ENCODE measurements at regions of chr20 and their contacts with region 1.

Region 1: GRCh38 chr20:49594143-49594930 is 26.4 kb upstream of the PTGIS start:
- DNase-seq: no peak
- CTCF ChIP-seq: no peak

Region 2: GRCh38 chr20:49140834-49141233 is 453.5 kb before region 1 on chr20:
- CTCF ChIA-PET with region 1: no interaction called
- POLR2A ChIA-PET with region 1: no interaction called
- DNase-seq: no peak
- CTCF ChIP-seq: no peak

Region 3: DNA sequence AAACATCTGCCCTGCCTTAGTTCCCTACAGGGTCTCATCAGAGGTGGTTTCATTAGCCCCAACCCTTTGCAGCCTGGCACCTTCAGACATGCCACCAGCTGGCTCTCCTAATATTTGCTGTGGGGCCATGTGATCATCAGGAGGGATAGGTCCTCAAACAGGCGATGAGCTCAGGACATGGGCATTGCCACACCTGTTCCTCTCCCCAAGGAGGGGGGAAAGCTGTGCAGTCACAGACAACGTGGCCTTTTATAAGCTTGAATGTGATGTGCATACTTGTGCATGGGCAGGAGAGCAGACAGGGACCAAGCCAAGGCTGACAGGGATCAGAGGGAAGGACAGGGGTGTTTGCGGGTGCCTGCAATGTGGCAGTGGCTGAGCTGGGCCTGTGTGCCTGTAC is 237.7 kb before region 1 on chr20:
- CTCF ChIA-PET with region 1: no interaction called
- POLR2A ChIA-PET with region 1: no interaction called
- DNase-seq: no peak
- CTCF ChIP-seq: no peak

Region 4: GRCh38 chr20:49583669-49584417 is 10.5 kb before region 1 on chr20:
- CTCF ChIA-PET with region 1: interaction called, 12 read pairs
- POLR2A ChIA-PET with region 1: no interaction called
- DNase-seq: no peak
- CTCF ChIP-seq: no peak